PC-3 (cell line): ENCODE measurements at regions of chr14 and their contacts with region 1.

Region 1: DNA sequence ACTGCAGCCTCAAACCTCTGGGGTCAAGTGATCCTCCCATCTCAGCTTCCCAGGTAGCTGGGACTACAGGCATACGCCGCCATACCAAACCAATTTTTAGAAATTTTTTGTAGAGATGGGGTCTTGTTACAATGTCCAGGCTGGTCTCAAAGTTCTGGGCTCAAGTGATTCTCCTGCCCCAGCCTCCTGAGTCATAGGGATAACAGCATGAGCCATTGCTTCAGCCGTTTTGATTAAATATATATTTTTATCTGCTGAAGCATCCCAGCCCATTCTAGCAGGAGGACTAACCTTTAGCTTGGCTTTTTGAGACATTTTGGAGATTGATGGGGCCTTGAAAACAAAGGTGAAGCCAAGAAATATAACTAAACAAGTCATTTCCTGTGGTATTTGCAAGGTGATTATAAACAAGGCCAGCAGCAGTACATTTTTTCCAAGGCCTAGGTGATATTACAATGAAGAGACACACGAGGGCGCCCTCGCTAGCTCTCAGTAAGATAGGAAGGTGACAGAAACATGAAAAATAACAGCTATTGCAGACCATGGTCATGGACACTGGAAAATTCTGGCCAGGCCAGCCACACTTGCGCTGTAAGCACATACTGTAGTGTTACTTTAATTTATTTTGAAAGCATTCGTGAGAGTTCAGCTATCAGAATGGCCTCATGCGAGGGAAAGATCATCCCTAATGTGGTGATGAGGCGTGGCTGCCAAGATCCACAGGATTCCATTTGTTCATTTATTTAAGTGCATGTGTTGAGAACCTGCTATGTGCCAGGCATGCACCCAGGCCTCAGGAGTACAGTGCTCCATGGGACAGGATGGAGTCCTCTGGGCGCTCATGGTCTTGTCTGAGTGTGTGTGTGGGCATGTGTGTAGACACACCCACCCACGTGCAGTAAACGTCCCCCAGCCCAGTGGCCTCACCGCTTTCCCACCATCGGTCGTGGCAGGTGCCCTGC is 63.5 kb downstream of the DGLUCY start:
- DNase-seq: peak; percentile 89
- ATAC-seq: peak; percentile 78
- H3K4me3 ChIP-seq: no peak overlapping the region
- H3K27ac ChIP-seq: no peak overlapping the region
- H3K4me1 ChIP-seq: no peaks in the 10 kb centered on the region
- H3K27me3 ChIP-seq: no peaks in the 10 kb centered on the region
- CTCF ChIP-seq: peak; percentile 93

Region 2: GRCh38 chr14:90903101-90903500 is 274.3 kb before region 1 on chr14:
- CTCF ChIA-PET with region 1: interaction called, 24 read pairs
- POLR2A ChIA-PET with region 1: no interaction called
- intact Hi-C with region 1: loop called (anchors 1 kb)
- DNase-seq: peak; percentile 75
- ATAC-seq: peak; percentile 99
- H3K4me3 ChIP-seq: no peak overlapping the region
- H3K27ac ChIP-seq: no peak overlapping the region
- H3K4me1 ChIP-seq: no peaks in the 10 kb centered on the region
- H3K27me3 ChIP-seq: no peaks in the 10 kb centered on the region
- CTCF ChIP-seq: peak; percentile 91

Region 3: GRCh38 chr14:91138511-91139359 is 38.6 kb before region 1 on chr14:
- CTCF ChIA-PET with region 1: interaction called, 5 read pairs
- POLR2A ChIA-PET with region 1: no interaction called
- intact Hi-C with region 1: loop called (anchors 1 kb)
- DNase-seq: peak; percentile 75
- ATAC-seq: peak; percentile 25
- H3K4me3 ChIP-seq: no peak overlapping the region
- H3K27ac ChIP-seq: no peak overlapping the region
- H3K4me1 ChIP-seq: peaks cover 8% of the 10 kb centered on the region
- H3K27me3 ChIP-seq: no peaks in the 10 kb centered on the region
- CTCF ChIP-seq: peak; percentile 78

Region 4: GRCh38 chr14:91228112-91229004 is 51.0 kb after region 1 on chr14:
- CTCF ChIA-PET with region 1: no interaction called
- POLR2A ChIA-PET with region 1: no interaction called
- intact Hi-C with region 1: loop called (anchors 2 kb)
- DNase-seq: peak; percentile 85
- ATAC-seq: peak; percentile 79
- H3K4me3 ChIP-seq: no peak overlapping the region
- H3K27ac ChIP-seq: peak overlapping the region; percentile 89
- H3K4me1 ChIP-seq: peaks cover 51% of the 10 kb centered on the region
- H3K27me3 ChIP-seq: no peaks in the 10 kb centered on the region
- CTCF ChIP-seq: no peak

Region 5: DNA sequence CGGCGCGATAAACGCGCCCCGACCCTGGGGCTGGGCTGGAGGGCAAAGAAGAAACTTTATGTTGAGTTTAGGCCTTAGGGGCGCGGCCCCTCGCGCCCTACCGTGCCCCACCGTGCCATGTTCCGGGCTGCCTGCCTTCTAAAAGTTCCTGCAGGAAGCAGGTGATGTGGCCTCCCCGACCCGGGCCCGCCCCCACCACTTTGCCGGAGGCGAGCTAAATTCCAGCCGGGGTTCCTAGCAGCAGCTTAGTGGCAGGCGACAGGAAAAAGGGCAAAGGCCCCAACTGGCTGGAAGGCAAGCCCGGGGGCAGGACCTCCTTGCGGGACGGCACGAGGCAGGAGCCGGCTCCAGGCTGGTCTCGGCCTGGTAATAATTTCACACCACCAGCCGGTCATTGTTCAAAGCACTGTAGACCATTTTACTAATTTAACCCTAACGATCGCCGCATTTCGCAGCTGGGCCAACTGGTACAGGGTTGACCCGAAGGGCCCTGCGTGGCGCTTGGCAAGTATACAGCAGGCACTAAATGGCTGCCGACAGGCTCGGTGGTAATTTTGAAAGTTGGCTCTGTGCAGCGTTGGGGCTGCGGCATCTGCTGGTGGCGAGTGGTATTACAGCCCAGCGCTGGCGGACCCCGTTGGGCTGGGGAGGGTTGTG is 241.2 kb after region 1 on chr14:
- CTCF ChIA-PET with region 1: no interaction called
- POLR2A ChIA-PET with region 1: no interaction called
- intact Hi-C with region 1: loop called (anchors 1 kb)
- DNase-seq: peak; percentile 72
- ATAC-seq: peak; percentile 13
- H3K4me3 ChIP-seq: peak overlapping the region; percentile 52
- H3K27ac ChIP-seq: peak overlapping the region; percentile 36; the same call in 1 of the 2 replicates
- H3K4me1 ChIP-seq: peaks cover 17% of the 10 kb centered on the region
- H3K27me3 ChIP-seq: no peaks in the 10 kb centered on the region
- CTCF ChIP-seq: peak; percentile 97